ENCODE measurements at regions of chr11 and their contacts with region 1.

Region 1: DNA sequence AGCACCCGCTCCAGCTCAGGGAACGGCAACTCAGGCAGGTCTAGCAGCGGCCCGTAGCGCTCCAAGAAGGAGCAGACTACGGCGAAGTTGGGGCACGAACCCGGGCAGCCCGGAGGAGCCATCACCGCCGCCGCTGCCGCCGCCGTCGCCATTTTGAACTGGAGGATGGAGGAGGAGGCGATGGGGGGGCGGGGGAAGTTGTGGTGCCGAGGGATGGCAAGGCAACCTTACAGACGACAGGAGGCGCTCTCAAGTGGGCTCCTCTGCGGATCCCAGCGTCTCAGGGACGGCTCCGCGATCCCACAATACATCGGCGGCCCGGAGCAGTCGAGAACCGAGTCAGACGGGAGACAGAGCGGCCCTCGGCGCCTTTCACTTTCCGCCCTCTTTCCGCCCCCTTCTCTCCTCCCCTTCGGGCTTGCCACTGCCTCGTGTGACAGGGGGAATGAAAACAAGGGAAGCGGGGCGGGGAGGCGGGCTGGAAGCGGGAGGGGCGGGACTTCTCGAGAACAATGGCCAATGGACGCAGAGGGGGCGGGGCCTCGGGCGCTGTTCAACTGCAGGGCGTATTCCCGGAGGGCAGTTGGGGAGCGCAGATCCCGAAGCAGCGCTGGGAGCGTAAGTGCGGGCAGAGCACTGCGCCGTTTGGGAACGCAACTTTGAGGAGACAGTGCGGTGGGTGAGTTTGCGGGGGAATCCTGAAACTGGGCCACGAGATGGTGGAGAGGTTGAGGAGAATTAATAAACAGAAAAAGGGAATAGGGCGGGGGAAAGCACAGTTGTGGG is at the starts of genes AAMDC and RSF1:
- DNase-seq: peak; percentile 92 to 99 (median 97)
- ATAC-seq: peak; percentile 79
- H3K4me3 ChIP-seq: peak within 1 kb of the TSS; percentile 79 to 95
- H3K4me3 Mint-ChIP-seq: peak within 1 kb of the TSS; percentile 100
- H3K27ac ChIP-seq: peak within 1 kb of the TSS; percentile 83 to 91
- H3K27ac Mint-ChIP-seq: peak within 1 kb of the TSS; percentile 99
- H3K4me1 ChIP-seq: peaks cover 35% of the 10 kb centered on the region
- H3K4me1 Mint-ChIP-seq: peaks cover 38% of the 10 kb centered on the region
- H3K27me3 ChIP-seq: no peaks in the 10 kb centered on the region
- H3K27me3 Mint-ChIP-seq: no peaks in the 10 kb centered on the region
- CTCF ChIP-seq: peak; percentile 53
- total RNA-seq, gene AAMDC: 1.4 to 2.0 TPM
- total RNA-seq, gene RSF1: 96.7 to 103 TPM

Region 2: GRCh38 chr11:76752321-76753185 is 1068.2 kb before region 1 on chr11:
- CTCF ChIA-PET with region 1: no interaction called
- POLR2A ChIA-PET with region 1: no interaction called
- intact Hi-C with region 1: no loop called
- DNase-seq: no peak
- ATAC-seq: no peak
- H3K4me3 ChIP-seq: no peak overlapping the region
- H3K4me3 Mint-ChIP-seq: no peak overlapping the region
- H3K27ac ChIP-seq: no peak overlapping the region
- H3K27ac Mint-ChIP-seq: no peak overlapping the region
- H3K4me1 ChIP-seq: no peaks in the 10 kb centered on the region
- H3K4me1 Mint-ChIP-seq: no peaks in the 10 kb centered on the region
- H3K27me3 ChIP-seq: no peaks in the 10 kb centered on the region
- H3K27me3 Mint-ChIP-seq: no peaks in the 10 kb centered on the region
- CTCF ChIP-seq: no peak

Region 3: DNA sequence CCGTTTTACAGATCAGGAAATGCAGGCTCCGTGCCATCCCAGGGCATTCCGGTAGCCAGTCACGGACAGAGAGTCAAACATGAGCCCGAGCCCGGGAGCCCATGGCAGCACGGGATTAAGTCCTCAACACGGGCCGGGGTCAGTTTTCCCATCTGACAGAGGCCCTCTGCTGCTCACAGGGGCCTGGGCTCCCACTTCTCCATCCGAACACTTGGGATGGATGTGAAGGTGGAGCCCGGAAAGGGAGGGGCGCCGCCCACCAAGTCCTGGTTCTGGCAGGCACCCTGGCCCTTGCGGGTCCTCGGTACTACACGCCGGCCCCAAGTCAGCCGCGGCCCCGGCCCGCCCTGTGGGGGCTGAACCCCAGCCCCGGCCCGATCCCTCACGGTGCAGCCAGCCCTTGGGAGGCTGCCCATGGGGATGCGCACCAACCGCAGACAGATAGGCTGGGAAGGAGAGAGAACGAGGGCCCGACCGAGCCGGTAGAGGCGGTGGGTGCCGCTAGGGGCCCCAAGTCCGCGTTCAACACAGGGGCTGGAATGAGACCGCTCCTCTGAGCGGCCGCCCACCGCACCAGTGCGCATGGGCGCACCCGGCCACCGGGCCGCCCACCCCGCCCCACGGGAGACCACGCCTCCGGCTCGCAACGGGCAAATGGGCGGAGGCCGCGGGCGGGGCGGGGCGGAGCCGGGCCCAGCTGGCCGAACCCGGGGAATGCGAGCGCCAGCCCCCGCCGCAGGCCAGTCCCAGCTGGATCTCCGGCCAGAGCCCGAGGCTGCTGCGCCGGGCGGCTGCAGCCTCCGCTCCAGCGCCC is 754.3 kb before region 1 on chr11 and contains the start of gene CAPN5:
- CTCF ChIA-PET with region 1: no interaction called
- POLR2A ChIA-PET with region 1: no interaction called
- intact Hi-C with region 1: loop called in 1 of 2 experiments (anchors 2 kb)
- DNase-seq: peak; percentile 68 to 93 (median 88)
- ATAC-seq: peak; percentile 91
- H3K4me3 ChIP-seq: peak within 1 kb of the TSS; percentile 56 to 87
- H3K4me3 Mint-ChIP-seq: peak within 1 kb of the TSS; percentile 83
- H3K27ac ChIP-seq: peak within 1 kb of the TSS; percentile 32 to 48
- H3K27ac Mint-ChIP-seq: peak within 1 kb of the TSS; percentile 69
- H3K4me1 ChIP-seq: peaks cover 22% of the 10 kb centered on the region
- H3K4me1 Mint-ChIP-seq: peaks cover 25% of the 10 kb centered on the region
- H3K27me3 ChIP-seq: no peaks in the 10 kb centered on the region
- H3K27me3 Mint-ChIP-seq: no peaks in the 10 kb centered on the region
- CTCF ChIP-seq: peak; percentile 40
- total RNA-seq, gene CAPN5: 6.5 to 7.4 TPM

Region 4: GRCh38 chr11:77637345-77638165 is 183.2 kb before region 1 on chr11 and contains the start of gene CLNS1A:
- CTCF ChIA-PET with region 1: no interaction called
- POLR2A ChIA-PET with region 1: no interaction called
- intact Hi-C with region 1: loop called (anchors 1 to 5 kb)
- DNase-seq: peak; percentile 51 to 88 (median 81)
- ATAC-seq: peak; percentile 99
- H3K4me3 ChIP-seq: peak within 1 kb of the TSS; percentile 88 to 91
- H3K4me3 Mint-ChIP-seq: peak within 1 kb of the TSS; percentile 95
- H3K27ac ChIP-seq: peak within 1 kb of the TSS; percentile 62 to 80
- H3K27ac Mint-ChIP-seq: peak within 1 kb of the TSS; percentile 97
- H3K4me1 ChIP-seq: peaks cover 26% of the 10 kb centered on the region
- H3K4me1 Mint-ChIP-seq: peaks cover 43% of the 10 kb centered on the region
- H3K27me3 ChIP-seq: no peaks in the 10 kb centered on the region
- H3K27me3 Mint-ChIP-seq: no peaks in the 10 kb centered on the region
- CTCF ChIP-seq: no peak
- total RNA-seq, gene CLNS1A: 84.6 to 87.5 TPM

Region 5: GRCh38 chr11:78139422-78140391 is 319.0 kb after region 1 on chr11 and contains the start of gene ALG8:
- CTCF ChIA-PET with region 1: no interaction called
- POLR2A ChIA-PET with region 1: no interaction called
- intact Hi-C with region 1: loop called in 1 of 2 experiments (anchors 5 kb)
- DNase-seq: peak; percentile 96 to 99 (median 97)
- ATAC-seq: peak; percentile 95
- H3K4me3 ChIP-seq: peak within 1 kb of the TSS; percentile 92
- H3K4me3 Mint-ChIP-seq: peak within 1 kb of the TSS; percentile 95
- H3K27ac ChIP-seq: peak within 1 kb of the TSS; percentile 74 to 90
- H3K27ac Mint-ChIP-seq: peak within 1 kb of the TSS; percentile 97
- H3K4me1 ChIP-seq: peaks cover 19% of the 10 kb centered on the region
- H3K4me1 Mint-ChIP-seq: peaks cover 35% of the 10 kb centered on the region
- H3K27me3 ChIP-seq: no peaks in the 10 kb centered on the region
- H3K27me3 Mint-ChIP-seq: no peaks in the 10 kb centered on the region
- CTCF ChIP-seq: no peak
- total RNA-seq, gene ALG8: 14.2 to 17.5 TPM

Region 6: DNA sequence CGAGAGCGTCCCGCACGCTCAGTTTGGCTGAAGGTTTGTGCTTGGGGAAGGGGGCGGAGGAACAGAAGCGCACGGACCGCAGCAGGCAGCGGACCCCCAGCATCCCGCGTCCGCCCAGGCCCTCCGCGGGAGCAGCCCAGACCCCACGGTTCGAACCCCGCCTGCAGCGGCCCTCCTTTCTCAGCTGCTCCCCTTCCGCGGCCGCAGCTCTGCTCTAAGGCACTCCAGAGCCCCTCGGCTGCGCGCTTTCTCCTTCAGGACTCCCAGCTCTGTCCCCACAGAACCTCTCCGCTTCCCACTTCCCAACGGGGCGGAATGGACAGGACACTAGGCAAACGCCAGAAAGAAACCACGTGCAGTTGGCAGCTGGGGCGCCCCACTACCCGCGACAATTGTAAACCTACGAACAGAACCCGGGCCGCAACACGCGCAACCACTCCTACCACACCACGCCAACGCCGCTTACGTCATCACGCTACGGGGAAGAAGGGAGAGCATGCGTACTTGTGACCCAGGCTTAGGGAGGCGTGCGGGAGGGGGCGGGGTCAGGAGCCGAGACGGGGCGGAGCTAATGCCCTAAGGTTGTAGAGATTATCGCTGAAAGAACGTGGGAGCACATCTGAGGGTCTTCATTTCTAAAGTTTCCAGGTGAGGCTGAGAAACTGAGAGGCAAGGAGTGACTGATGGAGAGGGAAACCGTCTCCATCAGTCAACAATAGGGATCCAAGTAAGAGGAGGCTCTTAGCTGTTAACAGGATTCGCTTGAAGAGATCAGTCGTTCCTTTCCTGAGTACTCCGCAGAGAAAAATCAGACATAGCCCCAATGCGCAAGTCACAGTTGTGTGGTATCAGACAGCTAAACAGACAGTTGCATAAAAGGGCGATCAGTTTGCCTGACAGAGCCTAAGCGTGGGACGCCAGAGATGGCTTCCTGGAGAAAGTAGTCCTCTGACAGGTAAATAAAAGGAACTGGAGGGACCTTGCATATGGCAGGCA is 753.9 kb after region 1 on chr11 and contains the start of gene NARS2:
- CTCF ChIA-PET with region 1: no interaction called
- POLR2A ChIA-PET with region 1: no interaction called
- intact Hi-C with region 1: loop called (anchors 2 to 10 kb)
- DNase-seq: peak; percentile 94 to 99 (median 98)
- ATAC-seq: peak; percentile 98
- H3K4me3 ChIP-seq: peak within 1 kb of the TSS; percentile 73 to 95
- H3K4me3 Mint-ChIP-seq: peak within 1 kb of the TSS; percentile 94
- H3K27ac ChIP-seq: peak within 1 kb of the TSS; percentile 77 to 88
- H3K27ac Mint-ChIP-seq: peak within 1 kb of the TSS; percentile 99
- H3K4me1 ChIP-seq: peaks cover 16% of the 10 kb centered on the region
- H3K4me1 Mint-ChIP-seq: peaks cover 39% of the 10 kb centered on the region
- H3K27me3 ChIP-seq: no peaks in the 10 kb centered on the region
- H3K27me3 Mint-ChIP-seq: peaks cover 4% of the 10 kb centered on the region
- CTCF ChIP-seq: no peak
- total RNA-seq, gene NARS2: 6.3 to 8.3 TPM